ENCODE measurements at regions of chr10 and their contacts with region 1.

Region 1: DNA sequence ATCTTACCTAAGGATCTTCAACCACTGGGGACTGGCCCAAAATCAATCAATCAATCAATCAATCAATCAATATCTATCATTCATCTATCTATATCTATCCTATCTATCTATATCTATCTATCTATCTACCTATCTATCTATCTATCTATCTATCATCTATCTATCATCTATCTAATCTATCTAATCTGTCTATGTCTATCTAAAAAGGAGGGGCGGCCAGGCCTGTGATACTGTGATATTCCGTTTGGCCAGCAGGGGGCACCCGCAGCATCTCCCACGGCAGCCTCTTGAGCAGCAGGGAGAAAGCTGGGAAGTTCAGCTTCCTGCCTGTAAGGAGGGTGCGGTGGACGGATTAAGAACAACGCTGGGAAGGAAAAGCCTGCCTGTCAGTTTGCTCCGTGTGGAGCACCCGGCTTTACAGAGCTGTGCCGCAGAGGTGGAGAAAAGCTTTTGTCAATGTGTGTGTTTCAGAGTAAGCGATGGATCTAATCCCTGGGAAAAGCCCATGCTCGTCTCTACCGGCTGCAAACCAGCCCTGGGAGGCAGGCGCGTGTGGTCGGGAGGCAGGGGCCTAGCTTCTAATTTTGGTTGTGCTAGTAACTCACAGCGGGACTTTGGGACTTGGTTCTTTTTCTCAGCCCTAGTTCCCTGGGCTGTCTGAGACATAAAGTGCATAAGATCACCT is 125.0 kb downstream of the SH2D4B start:
- DNase-seq: peak; percentile 89
- ATAC-seq: peak; percentile 83
- H3K4me3 Mint-ChIP-seq: peak overlapping the region; percentile 64
- H3K27ac Mint-ChIP-seq: peak overlapping the region; percentile 55
- H3K4me1 Mint-ChIP-seq: peaks cover 18% of the 10 kb centered on the region
- H3K27me3 Mint-ChIP-seq: no peaks in the 10 kb centered on the region
- CTCF ChIP-seq: peak; percentile 88

Region 2: GRCh38 chr10:80459047-80459931 is 203.4 kb before region 1 on chr10:
- CTCF ChIA-PET with region 1: interaction called, 10 read pairs
- POLR2A ChIA-PET with region 1: no interaction called
- DNase-seq: peak; percentile 30
- ATAC-seq: peak; percentile 7
- H3K4me3 Mint-ChIP-seq: peak overlapping the region; percentile 50
- H3K27ac Mint-ChIP-seq: peak overlapping the region; percentile 99
- H3K4me1 Mint-ChIP-seq: peaks cover 81% of the 10 kb centered on the region
- H3K27me3 Mint-ChIP-seq: no peaks in the 10 kb centered on the region
- CTCF ChIP-seq: no peak

Region 3: DNA sequence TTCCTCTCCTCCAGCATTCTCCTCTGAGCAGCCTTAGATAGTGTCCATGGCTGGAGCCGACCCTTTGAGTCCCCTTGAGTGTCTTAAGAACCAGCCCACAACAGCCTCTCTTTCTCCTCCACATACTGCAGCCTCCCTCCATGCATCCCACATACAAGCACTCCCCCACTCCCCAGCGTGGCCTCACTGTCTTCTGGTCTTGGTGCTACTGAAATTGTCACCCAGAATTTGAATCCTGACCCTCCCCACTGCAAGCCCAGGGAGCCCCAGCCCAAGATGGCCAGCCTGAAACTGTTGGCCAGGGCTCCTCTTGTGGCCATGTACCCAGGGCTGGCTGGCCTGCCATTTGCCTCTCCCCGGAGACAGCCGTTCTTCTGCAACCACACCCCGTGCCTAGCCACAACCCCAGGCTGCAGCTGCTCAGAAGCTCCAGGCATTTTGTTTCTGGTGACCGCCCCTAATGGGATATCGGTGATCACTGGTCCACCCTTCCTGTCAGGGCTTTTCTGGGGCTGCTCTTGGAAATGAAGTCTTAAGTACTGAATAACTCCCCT is 143.8 kb before region 1 on chr10:
- CTCF ChIA-PET with region 1: no interaction called
- POLR2A ChIA-PET with region 1: no interaction called
- DNase-seq: no peak
- ATAC-seq: no peak
- H3K4me3 Mint-ChIP-seq: no peak overlapping the region
- H3K27ac Mint-ChIP-seq: no peak overlapping the region
- H3K4me1 Mint-ChIP-seq: peaks cover 6% of the 10 kb centered on the region
- H3K27me3 Mint-ChIP-seq: no peaks in the 10 kb centered on the region
- CTCF ChIP-seq: no peak

Region 4: DNA sequence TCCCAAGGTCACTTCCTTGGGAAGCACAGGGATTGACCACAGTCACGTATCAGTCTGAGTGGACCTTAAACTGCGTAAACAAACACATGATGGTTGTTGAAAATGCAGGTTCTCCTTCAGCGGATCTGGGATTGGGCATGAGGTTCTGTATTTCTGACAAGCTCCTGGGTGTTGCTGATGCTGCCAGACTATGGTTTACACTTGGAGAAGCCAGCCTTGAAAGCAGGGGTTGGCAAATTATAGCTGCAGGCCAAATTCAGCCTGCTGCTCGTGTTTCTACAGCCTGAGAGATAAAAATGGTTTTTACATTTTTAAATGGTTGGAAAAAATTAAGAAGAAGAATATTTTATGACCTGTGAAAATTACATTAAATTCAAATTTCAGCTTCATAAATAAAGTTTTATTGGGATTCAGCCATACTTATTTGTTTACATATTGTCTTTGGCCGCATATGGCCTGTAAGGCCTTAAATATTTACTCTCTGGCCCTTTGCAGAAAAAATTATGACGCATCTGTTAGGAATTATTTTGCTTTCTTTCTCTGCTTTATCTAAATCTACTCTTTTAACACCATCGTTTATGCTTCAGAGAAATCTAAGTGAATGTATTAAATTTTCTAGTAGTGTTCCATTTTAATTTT is 15.4 kb before region 1 on chr10:
- CTCF ChIA-PET with region 1: interaction called, 31 read pairs
- POLR2A ChIA-PET with region 1: no interaction called
- DNase-seq: no peak
- ATAC-seq: no peak
- H3K4me3 Mint-ChIP-seq: no peak overlapping the region
- H3K27ac Mint-ChIP-seq: no peak overlapping the region
- H3K4me1 Mint-ChIP-seq: no peaks in the 10 kb centered on the region
- H3K27me3 Mint-ChIP-seq: no peaks in the 10 kb centered on the region
- CTCF ChIP-seq: no peak

Region 5: GRCh38 chr10:80699602-80700039 is 36.9 kb after region 1 on chr10:
- CTCF ChIA-PET with region 1: interaction called, 12 read pairs
- POLR2A ChIA-PET with region 1: no interaction called
- DNase-seq: peak; percentile 95
- ATAC-seq: peak; percentile 93
- H3K4me3 Mint-ChIP-seq: no peak overlapping the region
- H3K27ac Mint-ChIP-seq: no peak overlapping the region
- H3K4me1 Mint-ChIP-seq: peaks cover 26% of the 10 kb centered on the region
- H3K27me3 Mint-ChIP-seq: no peaks in the 10 kb centered on the region
- CTCF ChIP-seq: peak; percentile 84

Region 6: GRCh38 chr10:80870282-80870681 is 207.6 kb after region 1 on chr10:
- CTCF ChIA-PET with region 1: no interaction called
- POLR2A ChIA-PET with region 1: no interaction called
- DNase-seq: no peak
- ATAC-seq: no peak
- H3K4me3 Mint-ChIP-seq: no peak overlapping the region
- H3K27ac Mint-ChIP-seq: no peak overlapping the region
- H3K4me1 Mint-ChIP-seq: no peaks in the 10 kb centered on the region
- H3K27me3 Mint-ChIP-seq: no peaks in the 10 kb centered on the region; the same call in 1 of the 2 replicates
- CTCF ChIP-seq: no peak

Region 7: GRCh38 chr10:80924063-80924952 is 261.6 kb after region 1 on chr10:
- CTCF ChIA-PET with region 1: interaction called, 14 read pairs
- POLR2A ChIA-PET with region 1: no interaction called
- DNase-seq: peak; percentile 69
- ATAC-seq: peak; percentile 86
- H3K4me3 Mint-ChIP-seq: no peak overlapping the region
- H3K27ac Mint-ChIP-seq: no peak overlapping the region
- H3K4me1 Mint-ChIP-seq: peaks cover 44% of the 10 kb centered on the region
- H3K27me3 Mint-ChIP-seq: no peaks in the 10 kb centered on the region; the same call in 1 of the 2 replicates
- CTCF ChIP-seq: peak; percentile 45

Region 8: DNA sequence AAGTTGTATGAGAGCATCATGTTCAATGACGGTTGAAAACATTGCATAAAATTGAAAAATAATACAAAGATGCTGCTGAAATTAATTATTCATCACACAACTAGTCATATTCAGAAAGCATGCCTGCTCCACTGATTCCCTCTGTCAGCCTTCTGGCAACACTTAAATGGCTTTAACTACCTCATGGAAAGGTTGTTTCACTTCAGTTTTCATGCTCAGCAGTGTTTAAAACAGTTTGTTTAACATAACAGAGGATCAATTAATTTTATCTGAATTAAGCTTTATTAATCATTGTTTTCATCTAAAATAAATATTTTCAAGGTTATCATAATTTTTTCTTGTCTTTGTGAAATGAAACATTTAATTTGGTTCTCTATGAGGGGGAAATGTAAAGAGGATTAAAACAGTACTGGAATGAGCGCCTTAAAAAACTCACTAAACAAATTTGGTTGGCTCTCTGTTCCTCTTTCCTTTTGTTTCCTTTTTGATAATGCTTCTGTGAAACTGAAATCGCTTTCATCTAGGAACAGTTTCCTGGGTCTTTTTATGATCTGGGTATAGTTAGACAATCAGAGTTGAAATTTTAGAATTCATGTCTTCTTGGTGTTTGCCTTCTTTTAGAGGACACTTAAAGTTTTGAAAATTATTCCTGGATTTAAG is 302.4 kb after region 1 on chr10:
- CTCF ChIA-PET with region 1: no interaction called
- POLR2A ChIA-PET with region 1: no interaction called
- DNase-seq: no peak
- ATAC-seq: no peak
- H3K4me3 Mint-ChIP-seq: no peak overlapping the region
- H3K27ac Mint-ChIP-seq: no peak overlapping the region
- H3K4me1 Mint-ChIP-seq: peaks cover 10% of the 10 kb centered on the region
- H3K27me3 Mint-ChIP-seq: no peaks in the 10 kb centered on the region
- CTCF ChIP-seq: no peak

Region 9: GRCh38 chr10:81018708-81019365 is 356.1 kb after region 1 on chr10:
- CTCF ChIA-PET with region 1: interaction called, 32 read pairs
- POLR2A ChIA-PET with region 1: no interaction called
- DNase-seq: peak; percentile 51
- ATAC-seq: peak; percentile 93; the same call in 1 of the 2 replicates
- H3K4me3 Mint-ChIP-seq: no peak overlapping the region
- H3K27ac Mint-ChIP-seq: no peak overlapping the region
- H3K4me1 Mint-ChIP-seq: peaks cover 4% of the 10 kb centered on the region
- H3K27me3 Mint-ChIP-seq: no peaks in the 10 kb centered on the region
- CTCF ChIP-seq: peak; percentile 48

Measured in WTC11 (cell line).